ENCODE measurements at regions of chr11 and their contacts with region 1.

Region 1: DNA sequence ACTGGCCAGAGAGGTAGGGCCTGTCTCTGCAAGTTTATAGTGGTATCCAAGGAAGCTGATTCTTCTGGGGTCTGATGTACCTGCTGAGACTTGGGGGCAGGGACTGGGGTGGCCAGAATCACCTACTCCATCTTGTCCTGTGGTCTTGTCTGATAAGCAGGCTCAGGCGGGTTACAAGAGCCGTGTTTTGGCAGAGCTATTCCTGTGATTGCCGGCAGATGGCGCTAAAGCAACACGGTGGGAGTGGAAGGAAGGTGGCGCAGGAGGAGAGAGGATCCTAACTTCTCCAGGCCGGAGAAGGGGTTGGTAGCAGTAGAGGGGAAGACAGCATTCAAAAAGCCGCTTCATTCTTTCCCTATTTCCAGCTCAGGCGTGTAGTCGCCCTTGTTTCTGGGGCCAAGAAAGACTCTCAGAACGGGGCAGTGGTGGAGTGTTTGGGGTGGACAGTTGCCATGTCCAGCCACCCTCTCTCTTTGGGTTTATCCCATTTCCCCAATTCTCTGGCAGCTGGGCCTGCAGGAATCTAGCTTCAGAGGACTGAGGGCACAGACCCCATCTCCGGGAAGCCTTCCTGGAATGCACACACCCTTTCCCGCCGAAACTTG is 15.1 kb downstream of the CHRM1 start:
- DNase-seq: peak; percentile 70
- H3K4me3 ChIP-seq: no peak overlapping the region
- H3K27ac ChIP-seq: no peak overlapping the region
- H3K27me3 ChIP-seq: peaks cover 2% of the 10 kb centered on the region
- CTCF ChIP-seq: peak; percentile 100

Region 2: DNA sequence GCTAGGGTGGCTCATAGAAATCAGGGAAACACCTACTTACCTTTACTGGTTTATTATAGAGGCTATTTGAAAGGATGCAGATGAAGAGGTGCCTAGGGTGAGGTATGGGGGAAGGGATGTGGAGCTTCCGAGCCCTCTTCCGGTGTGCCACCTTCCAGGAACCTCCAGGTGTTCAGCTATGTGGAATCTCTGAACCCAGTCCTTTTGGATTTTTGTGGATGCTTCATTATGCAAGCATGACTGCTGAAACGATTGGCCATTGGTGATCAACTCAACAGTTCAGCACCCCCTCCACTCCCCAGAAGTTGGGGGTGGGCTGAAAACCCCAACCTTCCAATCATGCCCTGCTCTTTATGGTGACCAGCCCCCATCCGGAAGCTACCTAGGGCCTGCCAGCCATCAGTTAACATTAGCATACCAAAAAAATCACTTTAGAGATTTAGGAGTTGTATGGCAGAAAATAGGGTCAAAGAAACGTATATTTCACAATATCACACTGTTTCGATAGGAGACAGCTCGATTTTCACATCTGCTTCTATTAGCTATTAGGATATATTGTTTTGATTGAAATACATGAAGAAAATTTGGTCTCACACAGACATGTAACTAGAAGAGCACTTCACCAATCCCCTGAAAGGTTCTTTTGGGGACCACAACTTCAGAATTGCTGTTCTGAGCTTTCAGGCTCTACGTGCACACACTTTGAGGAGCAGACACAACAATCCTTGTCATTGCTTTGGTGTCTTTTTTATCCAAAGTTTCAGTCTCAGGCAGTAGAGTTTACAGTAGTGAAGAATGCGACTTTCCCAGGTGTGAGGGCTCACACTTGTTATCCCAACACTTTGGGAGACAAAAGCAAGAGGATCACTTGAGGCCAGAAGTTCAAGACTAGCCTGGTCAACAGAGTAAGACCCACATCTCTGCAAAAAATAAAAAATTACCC is 147.9 kb before region 1 on chr11:
- in situ Hi-C with region 1: no loop called
- DNase-seq: no peak
- H3K4me3 ChIP-seq: no peak overlapping the region
- H3K27ac ChIP-seq: no peak overlapping the region
- H3K27me3 ChIP-seq: no peaks in the 10 kb centered on the region
- CTCF ChIP-seq: no peak

Region 3: GRCh38 chr11:63023841-63024648 is 118.0 kb after region 1 on chr11:
- in situ Hi-C with region 1: loop called (anchors 25 kb)
- DNase-seq: peak; percentile 80
- H3K4me3 ChIP-seq: no peak overlapping the region
- H3K27ac ChIP-seq: no peak overlapping the region
- H3K27me3 ChIP-seq: no peaks in the 10 kb centered on the region
- CTCF ChIP-seq: peak; percentile 100